ENCODE measurements at regions of chr2 and their contacts with region 1.

Region 1: GRCh38 chr2:63614983-63615945 is 26.5 kb downstream of the MDH1 start:
- DNase-seq: no peak
- ATAC-seq: no peak
- H3K4me3 Mint-ChIP-seq: no peak overlapping the region
- H3K27ac Mint-ChIP-seq: no peak overlapping the region
- H3K4me1 Mint-ChIP-seq: no peaks in the 10 kb centered on the region
- H3K27me3 Mint-ChIP-seq: peaks cover 4% of the 10 kb centered on the region

Region 2: GRCh38 chr2:63372549-63372948 is 242.7 kb before region 1 on chr2:
- CTCF ChIA-PET with region 1: no interaction called
- POLR2A ChIA-PET with region 1: no interaction called
- intact Hi-C with region 1: loop called in 1 of 2 experiments (anchors 5 kb)
- DNase-seq: no peak
- ATAC-seq: no peak
- H3K4me3 Mint-ChIP-seq: no peak overlapping the region
- H3K27ac Mint-ChIP-seq: no peak overlapping the region
- H3K4me1 Mint-ChIP-seq: no peaks in the 10 kb centered on the region
- H3K27me3 Mint-ChIP-seq: no peaks in the 10 kb centered on the region

Region 3: GRCh38 chr2:63721082-63721424 is 105.8 kb after region 1 on chr2:
- CTCF ChIA-PET with region 1: no interaction called
- POLR2A ChIA-PET with region 1: no interaction called
- intact Hi-C with region 1: no loop called
- DNase-seq: no peak
- ATAC-seq: no peak
- H3K4me3 Mint-ChIP-seq: no peak overlapping the region
- H3K27ac Mint-ChIP-seq: no peak overlapping the region
- H3K4me1 Mint-ChIP-seq: no peaks in the 10 kb centered on the region
- H3K27me3 Mint-ChIP-seq: no peaks in the 10 kb centered on the region